CD4-positive, alpha-beta T cell (primary cell): ENCODE measurements at regions of chr1 and their contacts with region 1.

Region 1: GRCh38 chr1:146036965-146037646 is 15.6 kb upstream of the HJV start:
- DNase-seq: peak; percentile 50 to 88 (median 68)
- ATAC-seq: peak; percentile 59
- H3K4me3 ChIP-seq: peak overlapping the region; percentile 83
- H3K4me3 Mint-ChIP-seq: peak overlapping the region; percentile 98
- H3K27ac ChIP-seq: peak overlapping the region; percentile 58 to 83
- H3K27ac Mint-ChIP-seq: peak overlapping the region; percentile 100
- H3K4me1 ChIP-seq: peaks cover 38% of the 10 kb centered on the region
- H3K4me1 Mint-ChIP-seq: peaks cover 45% of the 10 kb centered on the region
- H3K27me3 ChIP-seq: no peaks in the 10 kb centered on the region
- H3K27me3 Mint-ChIP-seq: peaks cover 40% of the 10 kb centered on the region
- CTCF ChIP-seq: no peak

Region 2: DNA sequence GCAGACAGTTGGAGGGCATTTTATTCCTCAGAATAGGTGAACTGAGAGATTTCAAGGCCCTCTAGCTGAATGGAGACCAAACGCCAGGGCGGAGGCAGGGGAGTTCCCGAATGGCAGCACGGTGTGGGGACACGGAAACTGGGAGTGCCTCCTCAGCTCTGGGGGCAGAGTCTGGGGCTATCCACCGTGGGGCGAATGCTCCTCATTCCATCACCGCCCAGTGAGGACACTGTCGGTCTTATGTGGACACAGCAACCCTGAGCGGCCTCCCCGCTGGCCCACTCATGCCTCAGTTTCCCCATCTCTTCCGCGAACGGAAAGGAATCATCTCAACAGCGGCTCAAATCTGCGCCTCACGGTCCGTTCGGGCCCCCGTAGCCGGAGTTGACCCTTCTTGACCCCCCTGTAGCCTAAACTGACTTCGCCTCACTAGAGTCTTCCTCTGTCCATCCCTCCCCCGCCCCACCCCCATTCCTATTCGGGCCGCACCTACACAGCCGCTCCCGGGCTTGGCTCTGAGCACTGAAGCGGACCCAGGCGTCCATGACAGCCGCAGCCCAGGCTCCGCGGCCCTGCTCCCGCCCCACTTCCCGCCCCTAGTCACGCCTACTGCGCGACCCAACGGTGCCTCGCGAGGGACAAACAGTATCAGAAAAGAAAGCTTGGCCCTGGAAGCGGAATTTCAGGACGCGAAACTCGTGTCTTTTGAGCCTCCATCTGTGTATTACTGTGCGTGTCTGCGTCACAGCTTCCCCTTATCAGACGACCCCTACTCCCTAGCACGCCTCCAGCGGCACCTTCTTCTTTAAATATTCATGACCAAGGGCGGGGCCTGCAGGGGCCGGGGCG is 118.7 kb before region 1 on chr1 and contains the start of gene PEX11B:
- CTCF ChIA-PET with region 1: no interaction called
- POLR2A ChIA-PET with region 1: interaction called, 25 read pairs
- intact Hi-C with region 1: no loop called
- DNase-seq: peak; percentile 87 to 96 (median 92)
- ATAC-seq: peak; percentile 90
- H3K4me3 ChIP-seq: peak within 1 kb of the TSS; percentile 87
- H3K4me3 Mint-ChIP-seq: peak within 1 kb of the TSS; percentile 94
- H3K27ac ChIP-seq: peak within 1 kb of the TSS; percentile 52 to 60
- H3K27ac Mint-ChIP-seq: peak within 1 kb of the TSS; percentile 92
- H3K4me1 ChIP-seq: peaks cover 31% of the 10 kb centered on the region
- H3K4me1 Mint-ChIP-seq: peaks cover 47% of the 10 kb centered on the region
- H3K27me3 ChIP-seq: no peaks in the 10 kb centered on the region
- H3K27me3 Mint-ChIP-seq: no peaks in the 10 kb centered on the region
- CTCF ChIP-seq: no peak
- total RNA-seq, gene PEX11B: 11.6 to 13.2 TPM

Region 3: GRCh38 chr1:145949219-145949618 is 87.9 kb before region 1 on chr1:
- CTCF ChIA-PET with region 1: no interaction called
- POLR2A ChIA-PET with region 1: no interaction called
- intact Hi-C with region 1: no loop called
- DNase-seq: no peak
- ATAC-seq: no peak
- H3K4me3 ChIP-seq: no peak overlapping the region
- H3K4me3 Mint-ChIP-seq: no peak overlapping the region
- H3K27ac ChIP-seq: no peak overlapping the region
- H3K27ac Mint-ChIP-seq: peak overlapping the region; percentile 34
- H3K4me1 ChIP-seq: peaks cover 21% of the 10 kb centered on the region
- H3K4me1 Mint-ChIP-seq: peaks cover 49% of the 10 kb centered on the region
- H3K27me3 ChIP-seq: no peaks in the 10 kb centered on the region
- H3K27me3 Mint-ChIP-seq: no peaks in the 10 kb centered on the region
- CTCF ChIP-seq: no peak

Region 4: DNA sequence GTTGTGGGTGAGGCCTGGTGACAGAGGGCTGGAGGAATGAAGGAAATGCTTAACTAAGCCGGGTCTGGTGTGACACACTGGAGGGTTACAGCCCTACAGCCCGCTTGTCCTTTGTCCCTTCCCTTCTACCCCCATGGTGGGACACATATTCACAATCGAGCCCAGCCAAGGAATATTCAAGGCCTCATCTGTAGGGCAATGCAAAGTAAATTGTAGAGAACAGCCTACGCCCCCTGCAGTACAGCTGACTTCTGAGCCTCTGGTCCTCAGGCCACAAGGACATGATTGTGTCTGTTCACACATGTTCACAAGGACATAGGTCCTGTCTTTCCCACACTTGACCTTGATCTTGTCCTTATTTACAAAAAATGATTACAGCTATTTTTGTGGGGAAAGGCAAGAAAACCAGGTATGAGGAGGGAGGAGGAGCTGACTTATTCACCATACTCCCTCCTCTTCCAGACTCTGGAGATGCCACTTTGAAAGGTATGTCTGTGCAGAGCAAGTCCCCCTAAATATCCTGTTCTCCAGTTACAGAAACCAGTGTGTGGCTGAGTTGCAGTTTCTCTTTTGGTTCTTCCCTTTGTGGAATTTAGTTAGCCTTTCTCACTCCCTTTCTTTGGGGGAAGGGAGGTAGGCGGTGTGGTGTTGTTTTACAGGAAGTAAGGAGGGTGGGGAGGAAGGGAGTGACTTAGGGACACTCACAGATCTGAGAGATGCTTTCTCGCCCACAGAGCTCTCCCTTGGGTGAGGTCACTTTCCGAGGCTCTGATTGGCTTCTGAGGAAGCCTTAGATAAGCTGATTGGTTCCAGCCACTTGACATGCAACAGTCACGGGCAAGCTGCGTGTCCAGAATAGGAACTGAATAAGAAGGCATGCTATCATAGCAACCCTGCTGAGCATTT is 58.0 kb before region 1 on chr1:
- CTCF ChIA-PET with region 1: interaction called, 6 read pairs
- POLR2A ChIA-PET with region 1: interaction called, 40 read pairs
- intact Hi-C with region 1: no loop called
- DNase-seq: peak in 13 of 14 experiments; percentile 45 to 97 (median 66)
- ATAC-seq: peak; percentile 69
- H3K4me3 ChIP-seq: peak overlapping the region; percentile 45
- H3K4me3 Mint-ChIP-seq: no peak overlapping the region
- H3K27ac ChIP-seq: peak overlapping the region; percentile 93 to 94
- H3K27ac Mint-ChIP-seq: no peak overlapping the region
- H3K4me1 ChIP-seq: peaks cover 69% of the 10 kb centered on the region
- H3K4me1 Mint-ChIP-seq: peaks cover 6% of the 10 kb centered on the region
- H3K27me3 ChIP-seq: no peaks in the 10 kb centered on the region
- H3K27me3 Mint-ChIP-seq: no peaks in the 10 kb centered on the region
- CTCF ChIP-seq: peak; percentile 28

Region 5: DNA sequence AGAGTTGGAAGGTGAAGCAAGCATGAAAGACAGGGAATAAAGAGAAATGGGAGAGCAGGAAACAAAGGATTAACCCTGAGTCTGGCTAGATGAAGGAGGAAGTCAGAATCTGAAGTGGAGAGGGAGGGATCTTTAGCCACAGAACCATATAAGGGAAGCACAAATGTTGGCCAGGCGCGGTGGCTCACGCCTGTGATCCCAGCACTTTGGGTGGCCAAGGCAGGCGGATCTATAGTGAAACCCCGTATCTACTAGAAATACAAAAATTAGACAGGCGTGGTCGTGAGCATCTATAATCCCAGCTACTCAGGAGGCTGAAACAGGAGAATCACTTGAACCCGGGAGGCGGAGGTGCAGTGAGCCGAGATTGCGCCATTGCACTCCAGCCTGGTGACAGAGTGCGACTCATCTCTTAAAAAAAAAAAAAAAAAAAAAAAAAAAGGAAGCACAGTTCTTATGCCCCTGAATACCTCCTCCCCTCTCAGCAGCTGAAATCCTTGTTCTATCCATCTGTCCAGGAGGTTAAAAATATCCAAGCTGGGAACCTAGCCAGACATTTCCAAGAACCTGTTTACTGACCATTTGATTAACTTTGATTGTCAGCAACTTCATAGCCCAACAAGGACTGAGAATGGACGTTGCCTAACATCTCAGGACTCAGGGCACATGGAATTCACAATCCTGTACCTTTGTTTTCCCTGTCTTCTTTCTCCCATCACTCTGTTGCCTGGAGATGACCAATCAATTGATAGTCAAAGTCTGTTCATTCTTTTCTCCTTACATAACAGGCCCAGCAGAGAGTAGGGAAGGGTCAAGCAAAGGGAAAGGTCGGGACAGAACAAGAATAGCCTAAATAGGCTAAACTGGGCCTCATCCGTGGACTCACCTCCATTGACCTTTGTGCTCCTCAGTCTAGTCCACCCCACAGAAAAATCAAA is 51.3 kb before region 1 on chr1:
- CTCF ChIA-PET with region 1: interaction called, 3 read pairs
- POLR2A ChIA-PET with region 1: interaction called, 12 read pairs
- intact Hi-C with region 1: no loop called
- DNase-seq: peak in 2 of 14 experiments; percentile 37 to 42
- ATAC-seq: no peak
- H3K4me3 ChIP-seq: no peak overlapping the region
- H3K4me3 Mint-ChIP-seq: peak overlapping the region; percentile 35
- H3K27ac ChIP-seq: peak overlapping the region; percentile 42 to 45
- H3K27ac Mint-ChIP-seq: no peak overlapping the region
- H3K4me1 ChIP-seq: peaks cover 83% of the 10 kb centered on the region
- H3K4me1 Mint-ChIP-seq: peaks cover 25% of the 10 kb centered on the region
- H3K27me3 ChIP-seq: no peaks in the 10 kb centered on the region
- H3K27me3 Mint-ChIP-seq: no peaks in the 10 kb centered on the region
- CTCF ChIP-seq: no peak

Region 6: DNA sequence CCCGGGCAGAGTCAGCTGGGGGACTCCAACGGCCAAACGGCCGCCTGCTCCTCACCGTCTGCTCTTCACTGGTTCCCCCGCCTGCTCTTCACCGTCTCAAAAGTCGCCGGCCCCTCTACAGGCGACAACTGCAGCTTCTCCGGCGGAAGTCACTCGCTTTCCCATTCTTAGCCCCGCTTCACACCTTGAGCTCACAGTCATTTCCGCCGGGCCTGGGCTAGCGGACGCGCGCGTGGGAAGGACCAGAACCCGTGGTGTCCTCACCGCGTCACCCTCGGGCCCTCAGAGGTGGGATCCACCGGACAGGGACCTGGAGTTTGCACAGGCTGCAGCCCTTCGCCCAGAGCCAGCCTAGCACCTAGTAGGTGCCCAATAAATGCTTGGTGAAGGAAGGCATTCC is 12.3 kb after region 1 on chr1:
- CTCF ChIA-PET with region 1: interaction called, 6 read pairs
- POLR2A ChIA-PET with region 1: interaction called, 93 read pairs
- intact Hi-C with region 1: loop called (anchors 1 kb)
- DNase-seq: peak in 1 of 14 experiments; percentile 17
- ATAC-seq: no peak
- H3K4me3 ChIP-seq: no peak overlapping the region
- H3K4me3 Mint-ChIP-seq: no peak overlapping the region
- H3K27ac ChIP-seq: no peak overlapping the region
- H3K27ac Mint-ChIP-seq: no peak overlapping the region
- H3K4me1 ChIP-seq: peaks cover 10% of the 10 kb centered on the region
- H3K4me1 Mint-ChIP-seq: peaks cover 31% of the 10 kb centered on the region
- H3K27me3 ChIP-seq: no peaks in the 10 kb centered on the region
- H3K27me3 Mint-ChIP-seq: no peaks in the 10 kb centered on the region
- CTCF ChIP-seq: no peak